Naive thymus-derived CD4-positive, alpha-beta T cell (primary cell): ENCODE measurements at regions of chr9 and their contacts with region 1.

Region 1: GRCh38 chr9:21965401-21965951 is 28.7 kb downstream of the CDKN2A start:
- DNase-seq: peak in 1 of 9 donors; percentile 53
- ATAC-seq: peak; percentile 75
- H3K4me3 ChIP-seq: peak overlapping the region; percentile 33
- H3K4me3 Mint-ChIP-seq: peak overlapping the region in 9 of 10 donors; percentile 1 to 81 (median 57)
- H3K27ac ChIP-seq: no peak overlapping the region
- H3K27ac Mint-ChIP-seq: peak overlapping the region in 5 of 9 donors; percentile 1 to 78 (median 61)
- H3K4me1 ChIP-seq: peaks cover 10 to 18% of the 10 kb centered on the region in 2 donors
- H3K4me1 Mint-ChIP-seq: peaks cover 9 to 35% (median 25%) of the 10 kb centered on the region in 7 donors
- H3K27me3 ChIP-seq: peaks cover 56 to 66% of the 10 kb centered on the region in 2 donors
- H3K27me3 Mint-ChIP-seq: peaks cover 89 to 94% (median 94%) of the 10 kb centered on the region in 5 donors

Region 2: GRCh38 chr9:21831961-21832509 is 133.4 kb before region 1 on chr9:
- CTCF ChIA-PET with region 1: no interaction called
- POLR2A ChIA-PET with region 1: no interaction called
- intact Hi-C with region 1: loop called in 1 of 2 experiments (anchors 5 kb)
- DNase-seq: peak in 1 of 9 donors; percentile 54
- ATAC-seq: peak; percentile 84
- H3K4me3 ChIP-seq: no peak overlapping the region
- H3K4me3 Mint-ChIP-seq: peak overlapping the region in 1 of 10 donors; percentile 16
- H3K27ac ChIP-seq: no peak overlapping the region
- H3K27ac Mint-ChIP-seq: peak overlapping the region in 2 of 9 donors; percentile 6 to 16
- H3K4me1 ChIP-seq: no peaks in the 10 kb centered on the region
- H3K4me1 Mint-ChIP-seq: peaks cover 0 to 53% (median 10%) of the 10 kb centered on the region in 7 donors
- H3K27me3 ChIP-seq: no peaks in the 10 kb centered on the region
- H3K27me3 Mint-ChIP-seq: no peaks in the 10 kb centered on the region

Region 3: GRCh38 chr9:21989440-21990189 is 24.1 kb after region 1 on chr9:
- CTCF ChIA-PET with region 1: no interaction called
- POLR2A ChIA-PET with region 1: interaction called, 3 read pairs
- intact Hi-C with region 1: loop called in 1 of 2 experiments (anchors 1 kb)
- DNase-seq: no peak
- ATAC-seq: no peak
- H3K4me3 ChIP-seq: no peak overlapping the region
- H3K4me3 Mint-ChIP-seq: peak overlapping the region in 1 of 10 donors; percentile 5
- H3K27ac ChIP-seq: no peak overlapping the region
- H3K27ac Mint-ChIP-seq: peak overlapping the region in 3 of 9 donors; percentile 13 to 63 (median 51)
- H3K4me1 ChIP-seq: peaks cover 8 to 10% of the 10 kb centered on the region in 2 donors
- H3K4me1 Mint-ChIP-seq: peaks cover 0 to 33% (median 9%) of the 10 kb centered on the region in 7 donors
- H3K27me3 ChIP-seq: peaks cover 0 to 41% of the 10 kb centered on the region in 2 donors
- H3K27me3 Mint-ChIP-seq: peaks cover 52 to 76% (median 59%) of the 10 kb centered on the region in 5 donors